ENCODE measurements at regions of chr18 and their contacts with region 1.

Region 1: GRCh38 chr18:54043484-54044251 is 180.8 kb downstream of the MBD2 start:
- DNase-seq: no peak

Region 2: GRCh38 chr18:53698907-53699306 is 344.8 kb before region 1 on chr18:
- intact Hi-C with region 1: loop called (anchors 5 kb)
- DNase-seq: no peak

Region 3: DNA sequence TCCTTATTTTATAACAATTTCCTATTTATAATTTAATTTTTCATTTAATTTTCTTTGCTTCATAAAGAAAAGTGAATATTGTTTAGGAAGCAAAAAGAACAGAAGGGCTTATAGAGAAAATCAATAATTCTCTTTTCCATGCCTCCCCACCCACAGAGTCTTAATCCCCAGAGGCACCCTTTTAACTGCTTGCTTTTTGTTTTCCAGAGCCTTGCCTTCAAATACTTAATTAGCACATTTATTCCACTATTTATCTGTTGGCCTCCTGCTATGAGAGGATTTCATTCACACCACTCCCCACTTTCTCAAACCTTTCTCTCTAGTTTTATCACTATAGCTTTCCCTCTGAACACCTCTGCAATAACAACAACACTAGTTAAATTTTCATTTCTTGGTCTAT is 192.8 kb before region 1 on chr18:
- intact Hi-C with region 1: no loop called
- DNase-seq: no peak